Caco-2 (cell line): ENCODE measurements at regions of chr3 and their contacts with region 1.

Region 1: DNA sequence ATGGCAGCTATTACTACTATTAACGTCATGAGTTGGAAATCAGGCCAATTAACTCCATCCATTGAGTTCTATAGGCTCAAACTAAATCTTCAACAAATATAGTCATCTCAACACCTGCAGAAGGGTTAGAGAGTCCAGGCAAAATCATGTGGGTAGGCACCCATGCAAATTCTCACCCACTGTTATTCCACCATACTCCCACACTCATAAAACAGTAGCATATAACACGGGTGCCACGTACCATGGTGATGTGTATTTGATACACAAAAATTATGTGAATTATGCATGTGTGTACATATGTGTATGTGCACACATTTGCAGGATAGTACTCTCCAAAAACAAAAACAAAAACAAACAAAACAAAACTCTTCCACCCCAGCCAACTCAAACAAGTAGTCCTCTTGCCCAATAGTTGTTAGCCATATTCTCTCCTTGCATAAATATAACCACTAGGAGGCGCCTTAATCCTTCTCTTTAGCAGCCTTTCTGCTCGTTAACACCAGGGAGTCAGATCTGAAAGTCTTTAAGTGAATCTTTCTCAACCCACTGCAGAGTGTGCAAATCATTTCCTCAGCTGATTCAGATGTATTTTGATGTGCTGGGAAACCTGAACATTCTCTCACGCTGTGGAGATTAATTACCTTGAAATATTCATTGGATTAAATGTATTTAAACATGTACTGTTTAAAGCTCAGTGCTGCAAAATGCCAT is 38.0 kb upstream of the COPB2 start:
- DNase-seq: peak in 1 of 2 experiments; percentile 71
- H3K4me3 ChIP-seq: no peak overlapping the region
- H3K4me3 Mint-ChIP-seq: no peak overlapping the region
- H3K27ac Mint-ChIP-seq: no peak overlapping the region
- H3K4me1 ChIP-seq: no peaks in the 10 kb centered on the region
- H3K4me1 Mint-ChIP-seq: no peaks in the 10 kb centered on the region
- H3K27me3 ChIP-seq: no peaks in the 10 kb centered on the region
- H3K27me3 Mint-ChIP-seq: no peaks in the 10 kb centered on the region
- CTCF ChIP-seq: peak; percentile 68 to 76

Region 2: DNA sequence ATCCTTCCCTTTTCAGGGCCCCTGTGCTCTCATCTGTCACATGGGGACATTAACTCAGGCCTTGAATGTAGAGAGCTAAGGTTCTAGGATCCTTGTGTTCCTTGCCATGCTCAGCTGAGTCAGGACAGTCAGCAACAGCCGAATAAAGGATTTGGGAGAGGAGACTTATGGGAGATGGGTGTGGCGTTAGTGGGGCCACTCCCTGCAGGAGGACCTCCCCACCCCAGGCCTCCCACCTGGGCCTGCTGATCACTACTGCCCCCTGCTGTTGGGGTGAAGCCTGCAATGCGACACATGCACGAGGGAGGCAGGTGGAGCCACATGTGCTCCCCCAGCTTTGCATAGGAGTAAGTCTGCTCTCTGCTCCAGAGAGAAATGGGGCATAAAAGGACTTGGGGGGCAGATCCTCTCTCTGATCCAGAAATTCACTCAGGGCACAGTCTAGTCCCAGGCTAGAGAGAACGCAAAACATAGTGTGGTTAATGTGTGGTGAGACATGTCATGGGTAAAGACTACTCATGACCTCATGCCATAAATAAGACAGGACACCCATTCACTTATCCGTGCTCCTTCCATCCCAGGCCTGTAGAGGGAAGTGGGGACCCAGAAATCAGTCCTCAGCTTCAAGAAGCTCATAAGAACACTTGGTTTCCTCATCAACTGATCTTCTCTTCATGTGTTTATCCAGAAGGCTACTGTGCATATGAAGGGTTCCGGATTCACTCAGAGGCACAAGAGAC is 92.7 kb after region 1 on chr3:
- CTCF ChIA-PET with region 1: no interaction called
- POLR2A ChIA-PET with region 1: no interaction called
- intact Hi-C with region 1: loop called (anchors 1 kb)
- DNase-seq: peak; percentile 53 to 68
- H3K4me3 ChIP-seq: no peak overlapping the region
- H3K4me3 Mint-ChIP-seq: no peak overlapping the region
- H3K27ac Mint-ChIP-seq: no peak overlapping the region
- H3K4me1 ChIP-seq: no peaks in the 10 kb centered on the region
- H3K4me1 Mint-ChIP-seq: no peaks in the 10 kb centered on the region
- H3K27me3 ChIP-seq: no peaks in the 10 kb centered on the region
- H3K27me3 Mint-ChIP-seq: no peaks in the 10 kb centered on the region
- CTCF ChIP-seq: peak; percentile 40 to 51